K562 (cell line): ENCODE measurements at regions of chr17 and their contacts with region 1.

Region 1: GRCh38 chr17:29617125-29617480 is 5.6 kb downstream of the CORO6 start:
- DNase-seq: peak; percentile 56 to 66 (median 60)
- ATAC-seq: peak; percentile 23
- H3K4me3 ChIP-seq: no peak overlapping the region
- H3K27ac ChIP-seq: no peak overlapping the region
- H3K4me1 ChIP-seq: peaks cover 27 to 66% of the 10 kb centered on the region in 2 experiments
- H3K27me3 ChIP-seq: no peaks in the 10 kb centered on the region
- CTCF ChIP-seq: peak; percentile 55 to 72 (median 62)
- EP300 ChIP-seq: no peak
- POLR2A ChIP-seq: no peak
- RAD21 ChIP-seq: no peak; a peak in 1 of 4 replicates

Region 2: GRCh38 chr17:29483503-29483902 is 133.6 kb before region 1 on chr17:
- CTCF ChIA-PET with region 1: no interaction called
- POLR2A ChIA-PET with region 1: no interaction called
- in situ Hi-C with region 1: no loop called
- intact Hi-C with region 1: no loop called
- DNase-seq: no peak
- ATAC-seq: no peak
- H3K4me3 ChIP-seq: no peak overlapping the region
- H3K27ac ChIP-seq: no peak overlapping the region
- H3K4me1 ChIP-seq: no peaks in the 10 kb centered on the region
- H3K27me3 ChIP-seq: no peaks in the 10 kb centered on the region
- CTCF ChIP-seq: no peak
- EP300 ChIP-seq: no peak
- POLR2A ChIP-seq: no peak
- RAD21 ChIP-seq: no peak

Region 3: GRCh38 chr17:29514792-29515191 is 102.3 kb before region 1 on chr17:
- CTCF ChIA-PET with region 1: no interaction called
- POLR2A ChIA-PET with region 1: no interaction called
- in situ Hi-C with region 1: no loop called
- intact Hi-C with region 1: no loop called
- DNase-seq: no peak
- ATAC-seq: no peak
- H3K4me3 ChIP-seq: no peak overlapping the region
- H3K27ac ChIP-seq: no peak overlapping the region
- H3K4me1 ChIP-seq: no peaks in the 10 kb centered on the region
- H3K27me3 ChIP-seq: no peaks in the 10 kb centered on the region
- CTCF ChIP-seq: no peak
- EP300 ChIP-seq: no peak
- POLR2A ChIP-seq: no peak
- RAD21 ChIP-seq: no peak

Region 4: GRCh38 chr17:29579866-29580771 is 37.0 kb before region 1 on chr17:
- CTCF ChIA-PET with region 1: interaction called, 5 read pairs
- POLR2A ChIA-PET with region 1: interaction called, 3 read pairs
- in situ Hi-C with region 1: no loop called
- intact Hi-C with region 1: loop called (anchors 1 kb)
- DNase-seq: peak; percentile 72 to 80 (median 76)
- ATAC-seq: peak; percentile 92
- H3K4me3 ChIP-seq: no peak overlapping the region
- H3K27ac ChIP-seq: no peak overlapping the region
- H3K4me1 ChIP-seq: peaks cover 4 to 50% of the 10 kb centered on the region in 2 experiments; a peak in 3 of 5 replicates
- H3K27me3 ChIP-seq: no peaks in the 10 kb centered on the region
- CTCF ChIP-seq: peak; percentile 86 to 89 (median 87)
- EP300 ChIP-seq: no peak
- POLR2A ChIP-seq: no peak
- RAD21 ChIP-seq: peak; percentile 73 to 84

Region 5: DNA sequence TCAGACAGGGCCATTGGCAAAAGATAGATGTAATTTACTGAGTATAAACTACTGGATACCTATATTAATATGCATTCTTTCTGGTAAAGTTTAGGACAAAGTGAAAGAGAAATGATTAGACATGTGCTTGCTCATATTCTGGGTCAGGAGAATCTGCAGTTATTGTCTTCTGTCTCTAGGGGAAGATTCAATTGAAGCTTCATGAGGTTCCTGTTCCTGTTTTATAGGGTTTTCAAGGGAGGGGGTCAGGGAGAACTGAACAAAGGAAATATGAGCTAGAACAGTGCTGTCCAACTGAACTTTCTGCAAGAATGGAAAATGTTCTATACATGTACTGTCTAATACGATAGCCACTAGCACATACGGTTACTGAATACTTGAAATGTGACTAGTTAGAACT is 65.0 kb after region 1 on chr17:
- CTCF ChIA-PET with region 1: no interaction called
- POLR2A ChIA-PET with region 1: no interaction called
- in situ Hi-C with region 1: no loop called
- intact Hi-C with region 1: no loop called
- DNase-seq: peak in 2 of 4 experiments; percentile 27 to 47
- ATAC-seq: peak; percentile 79
- H3K4me3 ChIP-seq: no peak overlapping the region
- H3K27ac ChIP-seq: peak overlapping the region; percentile 47; the same call in 2 of the 3 replicates
- H3K4me1 ChIP-seq: peaks cover 9 to 15% of the 10 kb centered on the region in 2 experiments; a peak in 4 of 5 replicates
- H3K27me3 ChIP-seq: no peaks in the 10 kb centered on the region
- CTCF ChIP-seq: peak in 1 of 3 experiments; percentile 43; a peak in 2 of 6 replicates
- EP300 ChIP-seq: no peak
- POLR2A ChIP-seq: no peak
- RAD21 ChIP-seq: peak in 1 of 2 experiments; percentile 40; a peak in 2 of 4 replicates